Endothelial cell of umbilical vein (primary cell): ENCODE measurements at regions of chr4 and their contacts with region 1.

Region 1: DNA sequence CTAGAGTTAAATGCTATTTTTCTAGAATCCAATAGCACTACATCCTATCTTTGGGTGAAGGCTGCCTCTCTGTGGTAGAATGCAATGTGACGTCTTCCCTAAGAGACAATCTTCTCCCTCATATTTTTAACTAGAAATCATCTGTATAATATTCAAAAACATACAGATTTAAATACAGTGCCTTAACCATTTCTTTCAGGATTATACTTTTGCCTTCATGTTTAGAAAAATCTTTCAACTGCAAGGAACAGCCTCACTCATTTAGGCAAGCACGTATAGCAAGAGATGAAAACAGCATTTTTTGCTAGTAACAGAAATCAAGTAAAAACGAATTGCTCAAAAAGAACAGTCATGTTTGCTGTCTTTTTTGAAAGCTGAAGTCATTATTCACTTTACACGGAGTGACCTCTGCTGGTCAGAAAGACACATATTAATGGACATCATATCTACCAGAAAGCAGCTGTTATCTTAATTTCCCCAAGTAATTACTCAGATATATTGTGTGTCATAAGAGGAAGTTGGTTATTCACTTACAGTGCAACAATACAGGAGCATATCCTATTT is 422.3 kb downstream of the STPG2 start:
- DNase-seq: peak; percentile 93
- H3K4me3 ChIP-seq: no peak overlapping the region
- H3K27ac ChIP-seq: peak overlapping the region; percentile 60
- H3K4me1 ChIP-seq: peaks cover 12% of the 10 kb centered on the region
- H3K27me3 ChIP-seq: no peaks in the 10 kb centered on the region
- CTCF ChIP-seq: peak; percentile 3 to 32
- POLR2A ChIP-seq: no peak

Region 2: GRCh38 chr4:97507587-97508245 is 213.2 kb before region 1 on chr4:
- CTCF ChIA-PET with region 1: no interaction called
- POLR2A ChIA-PET with region 1: no interaction called
- dilution Hi-C with region 1: no loop called
- intact Hi-C with region 1: loop called (anchors 2 kb)
- DNase-seq: peak; percentile 63
- H3K4me3 ChIP-seq: no peak overlapping the region
- H3K27ac ChIP-seq: peak overlapping the region; percentile 63
- H3K4me1 ChIP-seq: peaks cover 12% of the 10 kb centered on the region
- H3K27me3 ChIP-seq: no peaks in the 10 kb centered on the region
- CTCF ChIP-seq: no peak
- POLR2A ChIP-seq: no peak

Region 3: GRCh38 chr4:97770222-97770621 is 49.3 kb after region 1 on chr4:
- CTCF ChIA-PET with region 1: interaction called, 13 read pairs
- POLR2A ChIA-PET with region 1: no interaction called
- dilution Hi-C with region 1: no loop called
- intact Hi-C with region 1: no loop called
- DNase-seq: peak; percentile 95
- H3K4me3 ChIP-seq: peak overlapping the region in 1 of 3 experiments; percentile 21
- H3K27ac ChIP-seq: peak overlapping the region; percentile 76
- H3K4me1 ChIP-seq: peaks cover 19% of the 10 kb centered on the region
- H3K27me3 ChIP-seq: no peaks in the 10 kb centered on the region
- CTCF ChIP-seq: no peak
- POLR2A ChIP-seq: no peak

Region 4: DNA sequence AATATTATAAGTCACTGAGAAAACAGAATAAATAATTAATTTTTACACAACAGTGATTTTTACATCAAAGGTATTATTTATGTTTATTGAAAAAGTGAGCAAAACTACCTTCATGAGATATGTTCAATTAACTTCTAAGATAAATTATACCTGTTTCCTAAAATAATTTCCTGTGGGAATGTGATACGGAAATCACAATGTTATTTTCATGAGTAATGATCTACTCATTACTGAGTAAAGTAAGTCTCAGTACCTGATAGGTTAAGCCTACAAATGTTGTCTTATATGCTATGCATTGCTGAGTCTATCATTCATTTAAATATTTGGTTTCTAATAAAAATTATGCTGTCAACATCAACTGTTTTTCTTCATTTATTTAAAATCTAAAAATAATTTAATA is 98.3 kb after region 1 on chr4:
- CTCF ChIA-PET with region 1: interaction called, 5 read pairs
- POLR2A ChIA-PET with region 1: no interaction called
- dilution Hi-C with region 1: no loop called
- intact Hi-C with region 1: loop called (anchors 5 kb)
- DNase-seq: peak; percentile 56
- H3K4me3 ChIP-seq: no peak overlapping the region
- H3K27ac ChIP-seq: no peak overlapping the region
- H3K4me1 ChIP-seq: peaks cover 23% of the 10 kb centered on the region
- H3K27me3 ChIP-seq: no peaks in the 10 kb centered on the region
- CTCF ChIP-seq: no peak
- POLR2A ChIP-seq: no peak

Region 5: GRCh38 chr4:97987019-97987648 is 266.2 kb after region 1 on chr4:
- CTCF ChIA-PET with region 1: interaction called, 56 read pairs
- POLR2A ChIA-PET with region 1: no interaction called
- dilution Hi-C with region 1: no loop called
- intact Hi-C with region 1: loop called (anchors 2 kb)
- DNase-seq: peak; percentile 71
- H3K4me3 ChIP-seq: no peak overlapping the region
- H3K27ac ChIP-seq: no peak overlapping the region
- H3K4me1 ChIP-seq: no peaks in the 10 kb centered on the region
- H3K27me3 ChIP-seq: no peaks in the 10 kb centered on the region
- CTCF ChIP-seq: peak; percentile 33 to 48
- POLR2A ChIP-seq: no peak

Region 6: DNA sequence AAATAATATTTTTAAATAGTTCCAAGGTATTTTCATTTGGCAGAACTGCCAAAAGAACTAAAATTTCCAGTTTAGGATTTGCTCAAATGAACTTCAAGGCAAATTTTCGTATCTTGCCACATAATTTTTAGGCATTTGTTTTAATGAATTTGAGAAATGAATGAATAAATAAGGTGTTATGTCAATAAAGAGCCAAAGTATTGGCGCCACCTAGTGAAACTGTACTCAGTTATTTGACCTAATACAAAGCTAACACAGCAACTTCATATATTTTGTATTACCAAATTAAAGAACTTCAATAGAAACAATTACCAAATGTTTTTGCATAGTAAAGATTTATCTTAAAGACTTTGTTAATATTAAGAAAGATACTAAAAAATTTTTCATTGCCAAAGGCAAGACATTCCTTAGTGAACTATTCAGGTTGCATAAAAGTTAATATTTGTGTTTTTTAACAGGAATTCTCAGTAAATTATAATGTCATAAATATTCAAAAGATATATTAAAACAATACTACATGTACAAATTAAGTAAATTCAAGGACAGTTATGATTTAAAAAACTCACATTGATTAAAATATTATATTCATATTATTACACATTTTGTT is 372.0 kb after region 1 on chr4:
- CTCF ChIA-PET with region 1: interaction called, 10 read pairs
- POLR2A ChIA-PET with region 1: no interaction called
- dilution Hi-C with region 1: no loop called
- intact Hi-C with region 1: no loop called
- DNase-seq: peak; percentile 43
- H3K4me3 ChIP-seq: no peak overlapping the region
- H3K27ac ChIP-seq: no peak overlapping the region
- H3K4me1 ChIP-seq: no peaks in the 10 kb centered on the region
- H3K27me3 ChIP-seq: peaks cover 0 to 1% of the 10 kb centered on the region in 2 experiments
- CTCF ChIP-seq: peak; percentile 26 to 33
- POLR2A ChIP-seq: no peak